AG04449 (cell line): ENCODE measurements at regions of chr2 and their contacts with region 1.

Region 1: DNA sequence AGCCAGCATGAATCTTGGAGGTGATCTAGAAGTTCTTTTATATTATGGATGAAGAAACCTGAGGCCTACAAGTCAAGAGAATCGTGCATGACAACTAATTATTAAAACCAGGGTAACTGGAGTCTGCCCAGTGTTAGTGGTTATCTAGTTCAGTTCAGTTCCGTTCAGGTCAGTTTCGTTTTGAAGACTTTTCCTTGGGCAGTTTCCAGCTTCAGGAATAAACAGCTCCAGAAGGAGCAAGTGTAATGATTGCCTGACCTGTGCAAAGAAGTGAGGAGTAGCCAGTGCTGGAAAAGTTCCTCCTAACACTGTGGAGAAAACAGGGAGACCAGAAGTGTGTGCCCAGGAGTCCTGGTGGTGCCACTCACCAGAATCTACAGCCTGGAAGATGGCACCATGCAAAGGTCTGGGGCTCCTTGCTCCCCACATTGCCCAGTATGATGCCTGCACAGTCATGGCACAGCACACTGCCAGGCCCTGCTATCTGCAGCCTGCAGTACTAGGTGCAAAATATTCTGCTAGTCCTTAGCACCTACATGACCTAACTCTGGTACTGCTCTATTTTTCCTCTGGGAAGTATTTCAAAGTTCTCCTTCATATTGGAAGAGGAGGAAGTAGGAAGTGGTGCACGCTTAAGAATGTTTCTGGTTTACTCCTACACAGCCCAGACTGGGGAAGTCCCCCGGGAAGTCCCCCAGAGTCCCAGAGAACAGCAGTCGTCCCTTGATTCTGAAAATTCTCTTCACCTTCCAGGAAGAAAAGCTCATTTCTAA is 65.8 kb downstream of the SUMO1 start:
- DNase-seq: no peak
- H3K4me3 ChIP-seq: no peak overlapping the region
- CTCF ChIP-seq: no peak

Region 2: GRCh38 chr2:202158796-202159195 is 13.8 kb before region 1 on chr2:
- CTCF ChIA-PET with region 1: interaction called, 13 read pairs
- POLR2A ChIA-PET with region 1: no interaction called
- DNase-seq: no peak
- H3K4me3 ChIP-seq: no peak overlapping the region
- CTCF ChIP-seq: peak; percentile 66